ENCODE measurements at regions of chr17 and their contacts with region 1.

Region 1: DNA sequence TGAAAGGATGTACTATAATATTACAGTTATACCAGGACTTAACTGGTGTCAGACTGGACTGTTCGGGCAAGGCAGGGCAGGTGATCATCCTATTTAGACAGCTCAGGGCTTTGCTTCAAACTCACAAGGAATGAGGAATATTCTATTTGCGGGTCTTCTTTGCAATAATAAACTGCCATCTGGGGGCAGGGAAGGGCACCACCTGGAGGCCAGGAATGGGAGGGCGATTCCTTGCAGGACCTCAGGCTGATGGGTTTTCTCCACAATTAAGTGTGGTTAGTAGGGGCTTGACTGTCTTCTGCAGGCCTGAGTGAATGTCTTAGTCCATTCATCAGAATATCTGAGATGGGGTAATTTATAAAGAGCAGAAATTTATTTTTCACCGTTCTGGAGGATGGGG is 424.1 kb downstream of the CA10 start:
- DNase-seq: peak in 1 of 5 donors; percentile 18
- ATAC-seq: no peak
- H3K4me3 ChIP-seq: no peak overlapping the region
- H3K27ac ChIP-seq: no peak overlapping the region
- H3K4me1 ChIP-seq: no peaks in the 10 kb centered on the region
- H3K27me3 ChIP-seq: peaks cover 0 to 13% (median 0%) of the 10 kb centered on the region in 9 donors
- CTCF ChIP-seq: peak in 11 of 12 donors; percentile 8 to 57 (median 30)
- POLR2A ChIP-seq: no peak

Region 2: GRCh38 chr17:51461578-51462004 is 272.9 kb before region 1 on chr17:
- intact Hi-C with region 1: loop called in 1 of 10 experiments (anchors 10 kb)
- DNase-seq: peak in 4 of 5 donors; percentile 22 to 64 (median 30)
- ATAC-seq: peak in 2 of 4 donors; percentile 39 to 48
- H3K4me3 ChIP-seq: no peak overlapping the region
- H3K27ac ChIP-seq: no peak overlapping the region
- H3K4me1 ChIP-seq: no peaks in the 10 kb centered on the region
- H3K27me3 ChIP-seq: peaks cover 0 to 10% (median 0%) of the 10 kb centered on the region in 9 donors
- CTCF ChIP-seq: peak; percentile 36 to 73 (median 56)
- POLR2A ChIP-seq: no peak

Region 3: DNA sequence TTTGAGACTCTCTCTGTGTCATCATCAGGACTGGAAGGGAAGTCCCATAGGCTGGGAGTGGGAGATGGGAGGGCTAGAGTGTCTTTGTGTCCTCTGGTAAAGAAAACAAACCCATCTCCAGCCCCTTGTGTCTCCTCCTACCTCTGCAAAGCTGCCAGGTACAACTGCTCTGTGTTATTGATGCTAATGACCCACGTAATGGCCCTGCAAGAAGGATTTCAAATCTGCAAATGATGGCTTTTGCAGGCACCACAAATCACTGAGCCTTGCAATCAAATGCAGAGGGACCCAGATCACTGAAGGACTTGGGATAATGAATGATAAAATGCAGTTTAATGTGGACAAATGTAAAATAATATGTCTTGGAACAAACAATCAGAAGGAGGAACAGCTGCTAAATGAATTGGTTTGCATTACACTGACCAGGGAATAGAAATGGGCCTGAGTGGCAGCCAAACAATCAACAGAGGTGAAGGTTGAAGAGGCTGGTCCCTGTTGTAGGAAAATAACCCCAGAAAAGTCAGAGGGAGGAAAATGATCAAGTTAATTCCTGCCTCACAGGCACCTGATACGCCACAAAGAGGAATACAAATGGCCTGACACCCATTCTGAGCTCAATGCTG is 49.1 kb before region 1 on chr17:
- intact Hi-C with region 1: no loop called
- DNase-seq: no peak
- ATAC-seq: no peak
- H3K4me3 ChIP-seq: no peak overlapping the region
- H3K27ac ChIP-seq: no peak overlapping the region
- H3K4me1 ChIP-seq: no peaks in the 10 kb centered on the region
- H3K27me3 ChIP-seq: no peaks in the 10 kb centered on the region
- CTCF ChIP-seq: no peak
- POLR2A ChIP-seq: no peak

Region 4: GRCh38 chr17:51703361-51704341 is 30.8 kb before region 1 on chr17:
- intact Hi-C with region 1: no loop called
- DNase-seq: peak; percentile 69 to 82 (median 77)
- ATAC-seq: peak; percentile 78 to 92 (median 90)
- H3K4me3 ChIP-seq: no peak overlapping the region
- H3K27ac ChIP-seq: peak overlapping the region in 8 of 12 donors; percentile 27 to 71 (median 58)
- H3K4me1 ChIP-seq: peaks cover 0 to 20% (median 6%) of the 10 kb centered on the region in 12 donors
- H3K27me3 ChIP-seq: no peaks in the 10 kb centered on the region
- CTCF ChIP-seq: no peak
- POLR2A ChIP-seq: no peak

Region 5: DNA sequence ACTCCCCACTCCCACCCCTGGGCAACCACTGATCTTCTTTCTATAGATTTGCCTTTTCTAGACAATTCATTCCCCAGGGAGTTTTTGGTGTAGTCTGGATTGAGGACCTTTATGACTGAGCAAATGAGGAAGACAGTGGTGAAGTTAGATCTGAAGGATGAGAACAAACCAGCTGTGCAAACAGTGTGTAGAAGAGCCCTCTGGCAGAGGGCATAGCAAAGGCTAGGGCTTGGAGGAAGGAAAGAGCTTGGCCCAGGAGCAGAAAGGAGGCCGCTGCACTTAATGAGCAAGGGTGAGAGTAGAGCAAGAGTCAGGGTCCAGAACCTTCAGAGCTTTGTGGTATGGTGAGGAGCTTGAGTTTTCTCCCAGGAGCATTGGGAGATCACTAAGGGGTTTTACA is 71.3 kb after region 1 on chr17:
- intact Hi-C with region 1: no loop called
- DNase-seq: no peak
- ATAC-seq: no peak
- H3K4me3 ChIP-seq: no peak overlapping the region
- H3K27ac ChIP-seq: no peak overlapping the region
- H3K4me1 ChIP-seq: no peaks in the 10 kb centered on the region
- H3K27me3 ChIP-seq: no peaks in the 10 kb centered on the region
- CTCF ChIP-seq: no peak
- POLR2A ChIP-seq: no peak